ENCODE measurements at regions of chr6 and their contacts with region 1.

Region 1: GRCh38 chr6:15365273-15365687 is 119.4 kb downstream of the JARID2 start:
- DNase-seq: peak; percentile 91
- ATAC-seq: peak; percentile 84 to 85

Region 2: GRCh38 chr6:15322781-15323536 is 42.3 kb before region 1 on chr6:
- intact Hi-C with region 1: loop called in 1 of 2 experiments (anchors 5 kb)
- DNase-seq: no peak
- ATAC-seq: peak in 1 of 2 donors; percentile 51

Region 3: DNA sequence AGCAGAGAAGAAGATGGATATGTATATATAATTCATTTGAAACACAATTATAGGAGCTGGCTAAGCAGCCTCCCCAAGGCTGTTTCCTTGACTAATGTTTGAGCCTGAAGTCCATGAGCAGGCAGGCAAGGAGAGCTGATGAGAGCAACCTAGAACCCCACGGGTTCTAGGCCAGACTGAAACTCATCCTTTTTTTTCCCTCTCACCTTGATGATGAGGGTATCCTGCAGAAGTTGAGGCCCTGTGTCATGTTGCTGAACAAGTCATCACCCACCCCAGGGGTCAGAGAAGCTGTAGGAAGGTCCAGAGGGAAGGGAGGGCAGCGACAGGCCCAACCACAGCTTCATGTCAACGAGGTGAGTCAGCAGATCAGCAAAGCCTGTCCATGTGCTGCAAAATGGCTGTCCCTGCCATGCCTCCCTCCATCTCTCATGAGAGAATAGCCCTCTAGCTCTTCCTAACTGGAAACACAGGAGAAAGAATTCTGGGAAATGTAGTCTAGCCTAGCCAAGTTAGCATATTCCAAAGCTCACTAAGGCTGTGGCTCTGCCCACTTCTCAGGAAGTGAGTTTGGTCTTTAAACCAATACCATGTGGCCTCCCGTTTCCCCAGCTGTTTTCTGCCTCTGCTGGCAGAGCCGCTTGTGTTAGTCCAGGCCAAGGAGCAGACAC is 388.9 kb after region 1 on chr6:
- intact Hi-C with region 1: no loop called
- DNase-seq: no peak
- ATAC-seq: peak; percentile 27 to 35